H1 (cell line): ENCODE measurements at regions of chr18 and their contacts with region 1.

Region 1: GRCh38 chr18:13813271-13813849 is 10.6 kb upstream of the MC5R start:
- DNase-seq: peak in 1 of 2 experiments; percentile 82
- H3K4me3 ChIP-seq: no peak overlapping the region
- H3K27ac ChIP-seq: no peak overlapping the region
- H3K4me1 ChIP-seq: peaks cover 14 to 41% (median 31%) of the 10 kb centered on the region in 4 experiments
- H3K27me3 ChIP-seq: no peaks in the 10 kb centered on the region
- CTCF ChIP-seq: peak; percentile 62 to 81 (median 71)
- EP300 ChIP-seq: no peak
- POLR2A ChIP-seq: no peak
- RAD21 ChIP-seq: peak; percentile 87

Region 2: DNA sequence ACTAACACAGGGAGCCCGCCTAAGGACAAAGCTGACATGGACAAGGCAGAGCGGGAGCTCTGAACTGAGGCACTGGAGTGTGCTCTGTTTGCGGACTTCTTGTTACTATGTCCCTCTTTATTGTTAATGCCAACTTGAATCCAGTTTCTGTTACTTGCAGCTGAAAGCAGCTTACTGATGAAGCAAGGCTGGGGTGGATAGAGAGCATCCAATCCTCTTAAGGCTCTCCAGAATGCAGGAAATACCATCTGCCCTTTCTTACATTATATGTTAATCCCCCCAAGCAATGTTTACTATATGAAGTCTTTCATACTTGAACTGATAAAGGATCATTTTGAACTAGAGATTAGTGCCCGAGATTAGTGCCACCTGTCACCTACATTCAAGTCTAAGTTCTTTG is 96.4 kb before region 1 on chr18:
- CTCF ChIA-PET with region 1: no interaction called
- POLR2A ChIA-PET with region 1: no interaction called
- DNase-seq: no peak
- H3K4me3 ChIP-seq: no peak overlapping the region
- H3K27ac ChIP-seq: no peak overlapping the region
- H3K4me1 ChIP-seq: peaks cover 0 to 5% (median 3%) of the 10 kb centered on the region in 4 experiments; a peak in 3 of 7 replicates
- H3K27me3 ChIP-seq: no peaks in the 10 kb centered on the region
- CTCF ChIP-seq: no peak
- EP300 ChIP-seq: no peak
- POLR2A ChIP-seq: no peak
- RAD21 ChIP-seq: no peak

Region 3: DNA sequence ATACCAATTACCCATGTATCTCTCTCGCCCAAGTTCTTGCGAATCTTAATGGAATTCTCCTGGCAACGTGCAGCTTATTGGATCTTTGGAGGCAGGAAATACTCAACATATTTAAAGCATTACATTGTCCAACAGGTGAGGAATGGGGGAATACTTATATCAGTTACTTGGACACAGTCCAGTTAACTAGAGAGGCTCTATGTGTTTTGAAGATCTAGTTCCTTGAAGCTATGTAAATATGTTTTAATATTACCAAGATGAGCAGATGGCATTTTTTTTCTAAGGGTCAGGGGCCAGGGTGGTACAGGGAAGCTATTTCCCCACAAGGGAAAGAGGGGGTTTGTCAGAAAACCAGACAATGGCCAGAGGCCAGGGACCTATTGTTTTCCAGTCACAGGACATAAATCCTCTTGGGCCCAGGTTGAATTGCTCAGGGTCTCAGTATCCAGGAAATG is 16.2 kb before region 1 on chr18:
- CTCF ChIA-PET with region 1: interaction called, 34 read pairs
- POLR2A ChIA-PET with region 1: interaction called, 3 read pairs
- DNase-seq: no peak
- H3K4me3 ChIP-seq: no peak overlapping the region
- H3K27ac ChIP-seq: no peak overlapping the region
- H3K4me1 ChIP-seq: peaks cover 2 to 11% (median 9%) of the 10 kb centered on the region in 4 experiments
- H3K27me3 ChIP-seq: peaks cover 0 to 11% (median 3%) of the 10 kb centered on the region in 4 experiments; a peak in 2 of 7 replicates
- CTCF ChIP-seq: no peak
- EP300 ChIP-seq: no peak
- POLR2A ChIP-seq: no peak
- RAD21 ChIP-seq: no peak

Region 4: GRCh38 chr18:13823707-13824395 is 10.5 kb after region 1 on chr18 and contains the start of gene MC5R:
- CTCF ChIA-PET with region 1: interaction called, 80 read pairs
- POLR2A ChIA-PET with region 1: interaction called, 3 read pairs
- DNase-seq: peak in 1 of 2 experiments; percentile 95
- H3K4me3 ChIP-seq: peak within 1 kb of the TSS in 3 of 4 experiments; percentile 27 to 55 (median 48); a peak in 5 of 8 replicates
- H3K27ac ChIP-seq: no peak within 1 kb of the TSS
- H3K4me1 ChIP-seq: peaks cover 0 to 2% (median 0%) of the 10 kb centered on the region in 4 experiments; a peak in 1 of 7 replicates
- H3K27me3 ChIP-seq: no peaks in the 10 kb centered on the region
- CTCF ChIP-seq: peak; percentile 82 to 93 (median 90)
- EP300 ChIP-seq: no peak
- POLR2A ChIP-seq: no peak
- RAD21 ChIP-seq: peak; percentile 90 to 95
- total RNA-seq, gene MC5R: 0.31 and 0.37 TPM in 2 replicates

Region 5: DNA sequence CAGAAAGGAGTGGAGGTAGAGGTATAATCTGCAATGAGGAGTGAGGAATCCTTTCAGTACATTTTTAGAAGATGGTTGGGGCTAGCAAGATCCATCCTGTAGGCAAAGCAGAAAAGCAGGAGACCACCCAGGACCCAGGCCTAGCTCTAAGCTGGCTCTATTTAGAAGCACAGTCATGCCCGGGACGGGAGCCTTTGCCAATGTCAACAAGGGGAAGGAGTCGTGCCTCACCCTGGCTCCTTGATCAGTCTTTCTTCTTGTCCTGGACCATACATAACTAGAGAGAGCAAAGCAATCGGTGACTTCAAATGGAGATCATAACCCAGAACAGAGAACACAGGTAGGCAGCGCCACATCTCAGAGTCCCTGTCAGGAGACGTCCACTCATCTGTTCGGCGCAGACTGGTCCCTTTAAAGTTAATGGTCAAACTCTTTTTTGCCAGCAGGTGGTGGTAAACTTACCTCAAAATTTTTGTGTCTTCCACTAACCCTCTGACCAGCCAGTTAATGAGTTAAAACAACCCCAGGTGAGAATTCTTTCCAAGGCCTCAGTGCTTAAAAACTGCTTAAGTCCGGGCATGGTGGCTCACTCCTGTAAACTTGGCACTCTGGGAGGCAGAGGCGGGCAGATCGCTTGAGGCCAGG is 18.6 kb after region 1 on chr18:
- CTCF ChIA-PET with region 1: interaction called, 80 read pairs
- POLR2A ChIA-PET with region 1: no interaction called
- DNase-seq: no peak
- H3K4me3 ChIP-seq: no peak overlapping the region
- H3K27ac ChIP-seq: no peak overlapping the region
- H3K4me1 ChIP-seq: 0 out of 7 replicates have a peak, but pooled peaks cover 0 to 3% (median 0%) of the 10 kb centered on the region in 4 experiments
- H3K27me3 ChIP-seq: no peaks in the 10 kb centered on the region
- CTCF ChIP-seq: peak in 2 of 3 experiments; percentile 36 to 52; a peak in 2 of 4 replicates
- EP300 ChIP-seq: no peak
- POLR2A ChIP-seq: no peak
- RAD21 ChIP-seq: peak; percentile 61 to 71

Region 6: DNA sequence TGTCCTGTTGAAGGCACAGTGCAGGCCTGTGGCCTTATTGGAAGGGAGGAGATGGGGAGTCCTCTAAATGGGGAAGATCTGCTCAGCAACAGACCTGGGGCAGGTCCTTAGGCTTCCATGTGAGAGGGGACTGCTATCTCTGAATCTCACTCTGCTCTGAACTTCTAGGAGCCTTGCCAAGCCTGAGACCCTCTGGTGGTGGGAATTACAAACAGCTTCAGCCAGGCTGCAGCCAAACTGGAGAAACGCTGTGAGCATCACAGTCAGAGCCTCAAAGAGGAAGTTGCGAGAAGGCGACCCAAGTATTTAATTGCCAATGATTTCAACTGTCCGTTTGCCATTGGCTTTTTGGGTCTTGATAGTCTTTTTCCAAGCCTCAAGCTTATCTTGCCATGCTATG is 168.8 kb after region 1 on chr18:
- CTCF ChIA-PET with region 1: interaction called, 10 read pairs
- POLR2A ChIA-PET with region 1: no interaction called
- DNase-seq: peak in 1 of 2 experiments; percentile 58
- H3K4me3 ChIP-seq: no peak overlapping the region
- H3K27ac ChIP-seq: no peak overlapping the region
- H3K4me1 ChIP-seq: no peaks in the 10 kb centered on the region; a peak in 1 of 7 replicates
- H3K27me3 ChIP-seq: no peaks in the 10 kb centered on the region
- CTCF ChIP-seq: peak; percentile 61 to 81 (median 63)
- EP300 ChIP-seq: no peak
- POLR2A ChIP-seq: no peak
- RAD21 ChIP-seq: peak; percentile 63 to 71

Region 7: DNA sequence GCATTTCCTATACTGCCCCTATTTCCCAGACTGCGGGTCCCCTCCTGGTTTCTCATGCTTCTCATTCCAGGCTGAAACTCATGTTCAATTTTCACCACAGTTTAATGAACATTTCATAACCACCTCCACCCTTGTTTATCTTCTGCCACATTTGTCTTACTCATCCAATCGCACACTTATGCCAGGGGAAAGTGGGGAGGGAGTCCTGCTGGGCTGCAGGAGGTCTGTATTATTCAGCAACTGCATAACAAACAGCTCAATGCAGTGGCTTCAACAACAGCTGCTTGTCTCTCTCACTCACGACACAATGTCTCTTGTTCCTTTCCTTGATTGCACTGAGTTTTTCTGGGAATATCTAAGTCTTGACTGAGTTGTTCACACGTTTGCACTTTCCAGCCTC is 212.8 kb after region 1 on chr18:
- CTCF ChIA-PET with region 1: no interaction called
- POLR2A ChIA-PET with region 1: no interaction called
- DNase-seq: peak in 1 of 2 experiments; percentile 9
- H3K4me3 ChIP-seq: peak overlapping the region in 2 of 4 experiments; percentile 3 to 28; a peak in 2 of 8 replicates
- H3K27ac ChIP-seq: no peak overlapping the region
- H3K4me1 ChIP-seq: peaks cover 0 to 17% (median 6%) of the 10 kb centered on the region in 4 experiments
- H3K27me3 ChIP-seq: no peaks in the 10 kb centered on the region
- CTCF ChIP-seq: no peak
- EP300 ChIP-seq: no peak
- POLR2A ChIP-seq: no peak
- RAD21 ChIP-seq: no peak

Region 8: GRCh38 chr18:14074187-14074586 is 260.8 kb after region 1 on chr18:
- CTCF ChIA-PET with region 1: interaction called, 13 read pairs
- POLR2A ChIA-PET with region 1: interaction called, 3 read pairs
- DNase-seq: peak in 1 of 2 experiments; percentile 7
- H3K4me3 ChIP-seq: no peak overlapping the region
- H3K27ac ChIP-seq: no peak overlapping the region
- H3K4me1 ChIP-seq: no peaks in the 10 kb centered on the region
- H3K27me3 ChIP-seq: no peaks in the 10 kb centered on the region
- CTCF ChIP-seq: peak; percentile 67 to 97 (median 72)
- EP300 ChIP-seq: no peak
- POLR2A ChIP-seq: no peak
- RAD21 ChIP-seq: peak; percentile 76

Region 9: DNA sequence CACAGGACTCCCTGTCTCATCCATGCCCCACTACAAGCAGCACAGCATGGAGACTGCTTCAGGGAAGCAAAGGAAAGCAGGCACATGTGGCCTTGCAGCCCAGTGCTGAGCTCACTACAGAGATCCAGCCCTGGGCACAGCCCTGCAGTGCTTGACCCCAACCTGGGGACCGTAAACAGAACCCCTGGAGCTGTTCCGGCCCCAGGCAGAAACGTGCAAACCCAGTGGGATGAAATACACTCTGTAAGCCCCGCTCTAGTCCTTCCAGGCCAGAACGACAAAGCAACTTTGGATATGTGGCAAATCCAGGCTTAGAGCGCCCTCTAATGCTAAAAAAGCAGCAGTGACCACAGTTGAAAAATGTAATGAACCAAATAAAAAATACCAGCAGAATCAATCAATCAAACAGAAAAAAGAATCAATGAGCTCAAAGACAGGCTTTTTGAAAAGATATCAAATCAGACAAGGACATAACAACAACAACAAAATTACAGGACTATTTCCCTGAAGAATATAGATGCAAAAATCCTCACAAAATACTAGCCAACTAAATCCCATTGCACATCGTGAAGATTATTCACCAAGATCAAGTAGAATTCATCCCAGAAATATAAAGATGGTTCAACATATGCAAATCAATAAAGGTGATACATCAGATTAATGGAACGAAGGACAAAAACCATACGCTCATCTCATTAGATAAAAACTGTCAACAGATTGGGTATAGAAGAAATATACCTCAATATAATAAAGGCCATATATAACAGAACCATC is 273.3 kb after region 1 on chr18:
- CTCF ChIA-PET with region 1: interaction called, 104 read pairs
- POLR2A ChIA-PET with region 1: interaction called, 3 read pairs
- DNase-seq: peak; percentile 34 to 60
- H3K4me3 ChIP-seq: no peak overlapping the region
- H3K27ac ChIP-seq: no peak overlapping the region
- H3K4me1 ChIP-seq: peaks cover 0 to 7% (median 4%) of the 10 kb centered on the region in 4 experiments; a peak in 5 of 7 replicates
- H3K27me3 ChIP-seq: no peaks in the 10 kb centered on the region
- CTCF ChIP-seq: peak in 2 of 3 experiments; percentile 78 to 86; a peak in 3 of 4 replicates
- EP300 ChIP-seq: no peak
- POLR2A ChIP-seq: no peak
- RAD21 ChIP-seq: peak; percentile 98